Activated CD4-positive, alpha-beta T cell treated with anti-CD3 and anti-CD28 coated beads, Interleukin-2, amount 10 ng/mL, durations not matched to agents 24 days and 14 days (primary cell): ENCODE measurements at regions of chrX and their contacts with region 1.

Region 1: DNA sequence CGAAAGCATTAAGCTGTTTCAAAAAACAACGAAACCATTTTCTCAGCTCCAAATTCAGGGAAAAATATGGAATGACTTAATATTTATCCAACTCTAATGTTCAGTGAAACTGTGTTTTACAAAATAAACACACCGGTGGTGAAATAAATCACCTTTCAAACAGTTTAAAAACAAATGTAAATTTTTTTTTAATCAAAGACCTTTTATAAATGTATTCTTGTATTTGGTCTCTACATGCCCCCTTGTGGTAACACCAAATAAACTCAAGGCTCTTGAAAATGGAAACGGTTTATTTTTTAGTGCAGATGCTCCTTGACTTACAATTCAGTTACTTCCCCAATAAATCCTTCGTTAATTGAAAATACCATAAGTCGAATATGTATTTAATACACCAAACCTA is 45.8 kb upstream of the ITM2A start:
- DNase-seq: no peak
- H3K4me3 Mint-ChIP-seq: peak overlapping the region; percentile 69
- H3K27ac Mint-ChIP-seq: peak overlapping the region; percentile 53
- H3K4me1 Mint-ChIP-seq: peaks cover 18% of the 10 kb centered on the region
- H3K27me3 Mint-ChIP-seq: no peaks in the 10 kb centered on the region

Region 2: GRCh38 chrX:79081895-79082512 is 331.0 kb before region 1 on chrX:
- intact Hi-C with region 1: loop called (anchors 5 kb)
- DNase-seq: peak; percentile 78
- H3K4me3 Mint-ChIP-seq: peak overlapping the region; percentile 78
- H3K27ac Mint-ChIP-seq: peak overlapping the region; percentile 87
- H3K4me1 Mint-ChIP-seq: peaks cover 14% of the 10 kb centered on the region
- H3K27me3 Mint-ChIP-seq: no peaks in the 10 kb centered on the region